Motor neuron (in vitro differentiated cells): ENCODE measurements at regions of chr5 and their contacts with region 1.

Region 1: DNA sequence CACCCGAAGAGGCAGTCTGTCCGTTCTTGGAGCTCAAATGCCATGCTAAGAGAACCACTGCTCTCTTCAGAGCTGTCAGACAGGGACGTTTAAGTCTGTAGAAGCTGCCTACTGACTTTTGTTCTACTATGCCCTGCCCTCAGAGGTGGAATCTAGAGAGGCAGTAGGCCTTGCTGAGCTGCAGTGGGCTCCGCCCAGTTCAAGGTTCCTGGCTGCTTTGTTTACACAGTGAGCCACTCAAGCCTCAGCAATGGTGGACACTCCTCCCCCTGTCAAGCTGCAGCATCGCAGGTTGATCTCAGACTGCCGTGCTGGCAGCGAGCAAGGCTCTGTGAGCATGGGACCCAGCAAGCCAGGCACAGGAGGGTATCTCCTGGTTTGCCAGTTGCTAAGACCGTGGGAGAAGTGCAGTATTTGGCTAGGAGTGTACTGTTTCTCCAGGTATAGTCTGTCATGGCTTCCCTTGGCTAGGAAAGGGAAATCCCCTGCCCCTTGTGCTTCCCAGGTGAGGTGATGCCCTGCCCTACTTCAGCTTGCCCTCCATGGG is 13.0 kb upstream of the BTNL8 start:
- ATAC-seq: peak in 7 of 8 experiments; percentile 31 to 63 (median 49)
- H3K4me3 ChIP-seq: no peak overlapping the region
- H3K27ac ChIP-seq: no peak overlapping the region
- H3K4me1 ChIP-seq: no peaks in the 10 kb centered on the region

Region 2: GRCh38 chr5:180784497-180785097 is 101.3 kb before region 1 on chr5:
- in situ Hi-C with region 1: no loop called
- ATAC-seq: peak; percentile 50 to 83 (median 60)
- H3K4me3 ChIP-seq: no peak overlapping the region
- H3K27ac ChIP-seq: no peak overlapping the region
- H3K4me1 ChIP-seq: peaks cover 10 to 15% of the 10 kb centered on the region in 2 donors

Region 3: GRCh38 chr5:180935203-180935602 is 49.3 kb after region 1 on chr5:
- in situ Hi-C with region 1: no loop called
- ATAC-seq: no peak
- H3K4me3 ChIP-seq: no peak overlapping the region
- H3K27ac ChIP-seq: no peak overlapping the region
- H3K4me1 ChIP-seq: no peaks in the 10 kb centered on the region

Region 4: DNA sequence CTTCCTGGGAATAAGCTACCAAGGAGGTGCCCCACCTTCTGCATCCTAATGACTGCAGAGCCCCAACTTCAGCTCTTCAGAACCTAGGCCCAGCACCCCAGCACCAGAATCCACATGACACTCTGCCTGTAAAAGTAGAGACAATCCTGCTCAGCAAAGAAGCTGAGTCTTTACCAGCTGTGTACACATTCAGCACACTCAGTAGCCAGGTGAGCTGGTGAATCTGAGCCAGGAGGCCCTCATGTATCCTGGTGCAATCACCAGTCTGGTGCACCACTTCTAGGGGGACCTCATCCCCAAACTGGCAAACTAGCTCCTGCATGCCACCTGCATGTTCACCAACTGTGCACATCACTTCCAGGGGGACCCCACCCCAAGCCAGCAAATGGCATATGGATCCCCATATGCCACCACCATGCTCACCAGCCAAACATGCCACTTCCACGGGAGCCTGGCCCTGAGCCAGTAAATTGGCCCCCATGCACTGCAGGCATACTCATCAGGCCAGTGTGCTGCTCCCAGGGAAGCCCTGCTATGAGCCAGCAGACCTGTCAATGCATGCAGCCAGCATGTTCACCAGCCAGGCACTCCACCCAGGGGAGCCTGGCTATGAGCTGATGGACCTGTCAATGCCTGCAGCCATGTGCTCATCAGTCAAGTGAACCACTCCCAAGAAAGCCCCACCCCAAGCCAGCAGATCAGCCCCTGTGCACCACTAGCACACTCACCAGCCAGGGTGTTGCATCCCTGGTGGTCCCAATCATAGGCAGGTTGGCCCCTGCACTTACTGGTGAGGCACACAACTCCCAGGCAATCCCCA is 138.5 kb after region 1 on chr5:
- in situ Hi-C with region 1: loop called in 1 of 9 experiments (anchors 25 kb)
- ATAC-seq: peak in 1 of 8 experiments; percentile 39
- H3K4me3 ChIP-seq: no peak overlapping the region
- H3K27ac ChIP-seq: no peak overlapping the region
- H3K4me1 ChIP-seq: no peaks in the 10 kb centered on the region

Region 5: DNA sequence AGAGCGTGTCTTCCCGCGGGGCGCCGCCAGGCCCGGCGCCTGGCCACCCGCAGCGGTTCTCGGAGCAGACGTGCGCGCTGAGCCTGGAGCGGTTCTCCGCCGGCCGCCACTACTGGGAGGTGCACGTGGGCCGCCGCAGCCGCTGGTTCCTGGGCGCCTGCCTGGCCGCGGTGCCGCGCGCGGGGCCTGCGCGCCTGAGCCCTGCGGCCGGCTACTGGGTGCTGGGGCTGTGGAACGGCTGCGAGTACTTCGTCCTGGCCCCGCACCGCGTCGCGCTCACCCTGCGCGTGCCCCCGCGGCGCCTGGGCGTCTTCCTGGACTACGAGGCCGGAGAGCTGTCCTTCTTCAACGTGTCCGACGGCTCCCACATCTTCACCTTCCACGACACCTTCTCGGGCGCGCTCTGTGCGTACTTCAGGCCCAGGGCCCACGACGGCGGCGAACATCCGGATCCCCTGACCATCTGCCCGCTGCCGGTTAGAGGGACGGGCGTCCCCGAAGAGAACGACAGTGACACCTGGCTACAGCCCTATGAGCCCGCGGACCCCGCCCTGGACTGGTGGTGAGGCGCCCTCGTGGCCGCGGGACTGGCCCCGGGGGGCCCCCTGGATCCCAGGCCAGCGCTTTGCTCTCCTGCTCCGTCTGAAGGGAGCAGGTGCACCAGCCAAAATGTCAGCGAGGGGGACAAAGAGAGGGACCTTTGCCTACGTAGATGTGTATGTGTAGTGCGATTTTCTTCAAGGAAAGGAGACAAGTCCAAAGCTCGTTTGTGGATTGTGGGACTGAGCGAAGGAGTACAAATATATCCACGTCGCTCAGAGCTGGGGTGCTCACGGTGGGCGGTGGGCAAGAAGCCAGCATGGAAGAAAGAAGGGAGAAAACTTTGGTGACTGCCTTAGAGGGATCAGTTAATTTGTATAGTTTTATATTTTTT is 173.6 kb after region 1 on chr5:
- in situ Hi-C with region 1: no loop called
- ATAC-seq: peak in 2 of 8 experiments; percentile 11 to 80
- H3K4me3 ChIP-seq: no peak overlapping the region
- H3K27ac ChIP-seq: no peak overlapping the region
- H3K4me1 ChIP-seq: no peaks in the 10 kb centered on the region